ENCODE measurements at regions of chr7 and their contacts with region 1.

Region 1: GRCh38 chr7:10838228-10838627 is 135.4 kb upstream of the PHF14 start:
- DNase-seq: no peak
- ATAC-seq: no peak
- H3K4me3 ChIP-seq: no peak overlapping the region
- H3K27ac ChIP-seq: no peak overlapping the region
- H3K4me1 ChIP-seq: no peaks in the 10 kb centered on the region
- H3K27me3 ChIP-seq: no peaks in the 10 kb centered on the region
- CTCF ChIP-seq: no peak

Region 2: GRCh38 chr7:10779465-10780399 is 58.5 kb before region 1 on chr7:
- CTCF ChIA-PET with region 1: no interaction called
- POLR2A ChIA-PET with region 1: interaction called, 13 read pairs
- in situ Hi-C with region 1: no loop called
- intact Hi-C with region 1: no loop called
- DNase-seq: no peak
- ATAC-seq: 0 out of 2 replicates have a peak, but pooled peaks have one; percentile 12
- H3K4me3 ChIP-seq: no peak overlapping the region
- H3K27ac ChIP-seq: no peak overlapping the region
- H3K4me1 ChIP-seq: no peaks in the 10 kb centered on the region
- H3K27me3 ChIP-seq: no peaks in the 10 kb centered on the region
- CTCF ChIP-seq: no peak